Endothelial cell of umbilical vein (primary cell): ENCODE measurements at regions of chr14 and their contacts with region 1.

Region 1: DNA sequence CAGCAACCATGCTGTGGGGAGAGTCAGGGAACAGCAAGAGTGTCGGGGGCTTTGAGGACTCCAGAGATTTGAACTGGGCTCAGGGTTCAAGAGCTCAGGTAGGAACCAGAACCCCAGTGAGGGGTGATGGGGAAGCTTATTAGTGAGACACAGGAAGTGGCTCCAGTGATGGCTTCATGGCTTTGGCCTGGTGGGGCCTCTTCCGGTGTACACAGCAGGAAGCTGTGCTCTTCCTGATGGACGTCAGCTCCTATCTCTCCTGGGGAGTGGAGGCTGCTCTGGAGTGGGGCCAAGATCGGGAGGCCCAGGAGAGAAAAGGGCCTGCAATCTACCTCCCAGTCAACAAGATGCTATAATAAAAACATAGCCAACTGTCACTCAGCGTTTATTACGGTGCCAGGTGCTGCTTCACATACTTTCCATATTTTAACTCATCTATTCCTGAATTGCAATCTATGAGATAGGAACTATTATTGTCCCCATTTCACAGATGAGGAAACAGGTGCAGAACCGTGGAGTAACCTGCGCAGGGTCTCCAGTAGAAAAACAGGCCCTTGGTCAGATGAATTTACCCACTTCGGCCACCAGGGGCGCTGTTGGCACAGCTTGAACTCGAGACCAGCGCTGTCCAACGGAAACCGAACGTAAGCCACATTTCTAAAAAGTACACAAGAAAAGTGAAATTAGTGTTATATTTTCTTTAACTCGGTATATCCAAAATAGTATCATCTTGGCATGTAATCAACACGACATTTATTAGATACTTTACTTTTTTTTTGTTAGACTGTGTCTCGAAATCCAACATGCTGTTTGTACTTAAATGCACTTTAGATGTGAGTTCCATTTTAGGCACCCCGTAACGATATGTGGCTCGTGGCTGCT is 63.6 kb upstream of the DLK1 start:
- DNase-seq: peak; percentile 66
- H3K4me3 ChIP-seq: no peak overlapping the region
- H3K27ac ChIP-seq: no peak overlapping the region
- H3K4me1 ChIP-seq: peaks cover 6% of the 10 kb centered on the region
- H3K27me3 ChIP-seq: no peaks in the 10 kb centered on the region
- CTCF ChIP-seq: peak; percentile 81 to 96
- POLR2A ChIP-seq: no peak

Region 2: GRCh38 chr14:100417466-100417865 is 245.7 kb before region 1 on chr14:
- CTCF ChIA-PET with region 1: interaction called, 17 read pairs
- POLR2A ChIA-PET with region 1: no interaction called
- dilution Hi-C with region 1: loop called (anchors 25 kb)
- intact Hi-C with region 1: no loop called
- DNase-seq: peak; percentile 88
- H3K4me3 ChIP-seq: no peak overlapping the region
- H3K27ac ChIP-seq: no peak overlapping the region
- H3K4me1 ChIP-seq: no peaks in the 10 kb centered on the region
- H3K27me3 ChIP-seq: no peaks in the 10 kb centered on the region
- CTCF ChIP-seq: peak; percentile 72 to 82
- POLR2A ChIP-seq: no peak

Region 3: GRCh38 chr14:100677554-100678468 is 14.7 kb after region 1 on chr14:
- CTCF ChIA-PET with region 1: interaction called, 21 read pairs
- POLR2A ChIA-PET with region 1: no interaction called
- dilution Hi-C with region 1: no loop called
- intact Hi-C with region 1: no loop called
- DNase-seq: no peak
- H3K4me3 ChIP-seq: no peak overlapping the region
- H3K27ac ChIP-seq: no peak overlapping the region
- H3K4me1 ChIP-seq: peaks cover 8% of the 10 kb centered on the region
- H3K27me3 ChIP-seq: peaks cover 0 to 2% of the 10 kb centered on the region in 2 experiments
- CTCF ChIP-seq: no peak
- POLR2A ChIP-seq: no peak

Region 4: GRCh38 chr14:100709289-100710284 is 46.5 kb after region 1 on chr14:
- CTCF ChIA-PET with region 1: interaction called, 10 read pairs
- POLR2A ChIA-PET with region 1: no interaction called
- dilution Hi-C with region 1: no loop called
- intact Hi-C with region 1: no loop called
- DNase-seq: peak; percentile 24
- H3K4me3 ChIP-seq: no peak overlapping the region
- H3K27ac ChIP-seq: no peak overlapping the region
- H3K4me1 ChIP-seq: peaks cover 5% of the 10 kb centered on the region
- H3K27me3 ChIP-seq: no peaks in the 10 kb centered on the region
- CTCF ChIP-seq: peak; percentile 13 to 58
- POLR2A ChIP-seq: no peak

Region 5: GRCh38 chr14:100726550-100727085 is 63.5 kb after region 1 on chr14 and contains the start of gene DLK1:
- CTCF ChIA-PET with region 1: no interaction called
- POLR2A ChIA-PET with region 1: no interaction called
- dilution Hi-C with region 1: no loop called
- intact Hi-C with region 1: no loop called
- DNase-seq: no peak
- H3K4me3 ChIP-seq: no peak within 1 kb of the TSS
- H3K27ac ChIP-seq: no peak within 1 kb of the TSS
- H3K4me1 ChIP-seq: no peaks in the 10 kb centered on the region
- H3K27me3 ChIP-seq: peaks cover 50 to 64% of the 10 kb centered on the region in 2 experiments
- CTCF ChIP-seq: no peak
- POLR2A ChIP-seq: no peak
- total RNA-seq, gene DLK1: not detected in 2 replicates

Region 6: GRCh38 chr14:100850841-100851585 is 187.9 kb after region 1 on chr14:
- CTCF ChIA-PET with region 1: no interaction called
- POLR2A ChIA-PET with region 1: no interaction called
- dilution Hi-C with region 1: no loop called
- intact Hi-C with region 1: loop called (anchors 1 kb)
- DNase-seq: peak; percentile 32
- H3K4me3 ChIP-seq: no peak overlapping the region
- H3K27ac ChIP-seq: no peak overlapping the region
- H3K4me1 ChIP-seq: no peaks in the 10 kb centered on the region
- H3K27me3 ChIP-seq: no peaks in the 10 kb centered on the region
- CTCF ChIP-seq: peak; percentile 71 to 85
- POLR2A ChIP-seq: no peak

Region 7: GRCh38 chr14:100906420-100906819 is 243.3 kb after region 1 on chr14:
- CTCF ChIA-PET with region 1: no interaction called
- POLR2A ChIA-PET with region 1: no interaction called
- dilution Hi-C with region 1: no loop called
- intact Hi-C with region 1: no loop called
- DNase-seq: no peak
- H3K4me3 ChIP-seq: no peak overlapping the region
- H3K27ac ChIP-seq: no peak overlapping the region
- H3K4me1 ChIP-seq: no peaks in the 10 kb centered on the region
- H3K27me3 ChIP-seq: peaks cover 0 to 3% of the 10 kb centered on the region in 2 experiments
- CTCF ChIP-seq: peak; percentile 23 to 28
- POLR2A ChIP-seq: no peak

Region 8: DNA sequence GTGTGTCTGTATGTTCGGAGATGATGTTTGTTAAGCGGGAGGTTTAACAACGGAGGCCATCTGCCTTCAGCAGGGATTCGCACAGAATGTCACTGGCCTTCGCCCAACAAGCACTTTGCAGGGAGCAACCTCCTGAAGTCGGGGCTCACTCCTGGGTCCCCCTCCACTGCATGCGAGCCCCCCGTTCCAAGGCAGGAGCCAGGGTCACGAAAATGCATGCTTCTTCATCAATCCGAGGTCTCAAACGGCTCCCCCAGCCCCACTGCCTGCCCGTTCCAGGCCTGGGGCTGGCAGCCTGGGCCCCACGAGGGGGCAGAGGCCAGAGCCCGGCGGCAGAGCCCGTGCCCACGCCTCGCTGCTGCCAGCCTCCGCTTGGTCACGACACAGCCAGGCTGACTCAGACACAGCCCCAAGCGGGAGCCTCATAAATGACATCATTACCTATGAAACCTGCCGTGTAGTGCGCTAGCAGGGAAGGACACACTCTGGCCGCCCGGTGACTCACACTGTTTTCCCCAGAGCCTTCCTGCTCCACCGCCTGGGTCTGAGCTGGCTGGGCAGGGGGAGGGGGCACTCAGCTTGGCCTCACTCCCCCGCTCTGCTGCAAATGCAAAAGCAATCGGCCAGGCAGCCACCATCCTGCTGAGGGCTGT is 410.0 kb after region 1 on chr14:
- CTCF ChIA-PET with region 1: no interaction called
- POLR2A ChIA-PET with region 1: no interaction called
- dilution Hi-C with region 1: no loop called
- intact Hi-C with region 1: loop called (anchors 5 kb)
- DNase-seq: peak; percentile 99
- H3K4me3 ChIP-seq: no peak overlapping the region
- H3K27ac ChIP-seq: peak overlapping the region; percentile 96
- H3K4me1 ChIP-seq: peaks cover 49% of the 10 kb centered on the region
- H3K27me3 ChIP-seq: no peaks in the 10 kb centered on the region
- CTCF ChIP-seq: peak in 1 of 2 donors; percentile 13
- POLR2A ChIP-seq: peak; percentile 22